CD8-positive, alpha-beta T cell (primary cell): ENCODE measurements at regions of chr22 and their contacts with region 1.

Region 1: GRCh38 chr22:41381329-41382097 is at the start of gene TEF:
- DNase-seq: peak; percentile 97 to 100 (median 98)
- ATAC-seq: peak; percentile 80
- H3K4me3 ChIP-seq: peak within 1 kb of the TSS; percentile 71 to 88
- H3K4me3 Mint-ChIP-seq: peak within 1 kb of the TSS; percentile 93
- H3K27ac ChIP-seq: peak within 1 kb of the TSS; percentile 87 to 95
- H3K27ac Mint-ChIP-seq: peak within 1 kb of the TSS; percentile 93
- H3K4me1 ChIP-seq: peaks cover 15% of the 10 kb centered on the region
- H3K4me1 Mint-ChIP-seq: peaks cover 21% of the 10 kb centered on the region
- H3K27me3 ChIP-seq: no peaks in the 10 kb centered on the region
- H3K27me3 Mint-ChIP-seq: no peaks in the 10 kb centered on the region
- CTCF ChIP-seq: no peak
- total RNA-seq, gene TEF: 2.8 to 3.8 TPM

Region 2: GRCh38 chr22:40808018-40808841 is 573.3 kb before region 1 on chr22:
- CTCF ChIA-PET with region 1: no interaction called
- POLR2A ChIA-PET with region 1: no interaction called
- intact Hi-C with region 1: no loop called
- DNase-seq: no peak
- ATAC-seq: no peak
- H3K4me3 ChIP-seq: no peak overlapping the region
- H3K4me3 Mint-ChIP-seq: no peak overlapping the region
- H3K27ac ChIP-seq: no peak overlapping the region
- H3K27ac Mint-ChIP-seq: no peak overlapping the region
- H3K4me1 ChIP-seq: no peaks in the 10 kb centered on the region
- H3K4me1 Mint-ChIP-seq: peaks cover 17% of the 10 kb centered on the region
- H3K27me3 ChIP-seq: no peaks in the 10 kb centered on the region
- H3K27me3 Mint-ChIP-seq: no peaks in the 10 kb centered on the region
- CTCF ChIP-seq: no peak

Region 3: GRCh38 chr22:41091132-41092022 is 290.1 kb before region 1 on chr22:
- CTCF ChIA-PET with region 1: no interaction called
- POLR2A ChIA-PET with region 1: interaction called, 5 read pairs
- intact Hi-C with region 1: loop called in 1 of 2 experiments (anchors 2 kb)
- DNase-seq: peak; percentile 99 to 100 (median 99)
- ATAC-seq: peak; percentile 88
- H3K4me3 ChIP-seq: peak overlapping the region; percentile 91 to 97
- H3K4me3 Mint-ChIP-seq: peak overlapping the region; percentile 99
- H3K27ac ChIP-seq: peak overlapping the region; percentile 93 to 96
- H3K27ac Mint-ChIP-seq: peak overlapping the region; percentile 100
- H3K4me1 ChIP-seq: peaks cover 16% of the 10 kb centered on the region
- H3K4me1 Mint-ChIP-seq: peaks cover 31% of the 10 kb centered on the region
- H3K27me3 ChIP-seq: no peaks in the 10 kb centered on the region
- H3K27me3 Mint-ChIP-seq: no peaks in the 10 kb centered on the region
- CTCF ChIP-seq: no peak

Region 4: GRCh38 chr22:41301105-41302020 is 80.2 kb before region 1 on chr22 and contains the start of gene ZC3H7B:
- CTCF ChIA-PET with region 1: no interaction called
- POLR2A ChIA-PET with region 1: interaction called, 19 read pairs
- intact Hi-C with region 1: loop called (anchors 1 kb)
- DNase-seq: peak; percentile 64 to 94 (median 81)
- ATAC-seq: peak; percentile 93
- H3K4me3 ChIP-seq: peak within 1 kb of the TSS; percentile 81 to 96
- H3K4me3 Mint-ChIP-seq: peak within 1 kb of the TSS; percentile 83
- H3K27ac ChIP-seq: peak within 1 kb of the TSS; percentile 72 to 80
- H3K27ac Mint-ChIP-seq: peak within 1 kb of the TSS; percentile 95
- H3K4me1 ChIP-seq: peaks cover 16% of the 10 kb centered on the region
- H3K4me1 Mint-ChIP-seq: peaks cover 29% of the 10 kb centered on the region
- H3K27me3 ChIP-seq: no peaks in the 10 kb centered on the region
- H3K27me3 Mint-ChIP-seq: no peaks in the 10 kb centered on the region
- CTCF ChIP-seq: peak; percentile 43
- total RNA-seq, gene ZC3H7B: 30.7 to 30.8 TPM

Region 5: GRCh38 chr22:41397143-41397811 is 15.8 kb after region 1 on chr22:
- CTCF ChIA-PET with region 1: no interaction called
- POLR2A ChIA-PET with region 1: no interaction called
- intact Hi-C with region 1: no loop called
- DNase-seq: no peak
- ATAC-seq: no peak
- H3K4me3 ChIP-seq: no peak overlapping the region
- H3K4me3 Mint-ChIP-seq: no peak overlapping the region
- H3K27ac ChIP-seq: no peak overlapping the region
- H3K27ac Mint-ChIP-seq: no peak overlapping the region
- H3K4me1 ChIP-seq: no peaks in the 10 kb centered on the region
- H3K4me1 Mint-ChIP-seq: no peaks in the 10 kb centered on the region
- H3K27me3 ChIP-seq: no peaks in the 10 kb centered on the region
- H3K27me3 Mint-ChIP-seq: no peaks in the 10 kb centered on the region
- CTCF ChIP-seq: no peak

Region 6: GRCh38 chr22:41468381-41469217 is 87.1 kb after region 1 on chr22 and contains the starts of genes ACO2 and PHF5A:
- CTCF ChIA-PET with region 1: interaction called, 3 read pairs
- POLR2A ChIA-PET with region 1: interaction called, 16 read pairs
- intact Hi-C with region 1: loop called (anchors 1 kb)
- DNase-seq: peak; percentile 97 to 99 (median 98)
- ATAC-seq: peak; percentile 90
- H3K4me3 ChIP-seq: peak within 1 kb of the TSS; percentile 92 to 94
- H3K4me3 Mint-ChIP-seq: peak within 1 kb of the TSS; percentile 91
- H3K27ac ChIP-seq: peak within 1 kb of the TSS; percentile 97 to 99
- H3K27ac Mint-ChIP-seq: peak within 1 kb of the TSS; percentile 99
- H3K4me1 ChIP-seq: peaks cover 23% of the 10 kb centered on the region
- H3K4me1 Mint-ChIP-seq: peaks cover 56% of the 10 kb centered on the region
- H3K27me3 ChIP-seq: no peaks in the 10 kb centered on the region
- H3K27me3 Mint-ChIP-seq: no peaks in the 10 kb centered on the region
- CTCF ChIP-seq: no peak
- total RNA-seq, gene ACO2: 83.7 to 95.2 TPM
- total RNA-seq, gene PHF5A: 52.9 to 57.4 TPM

Region 7: GRCh38 chr22:41621099-41621910 is 239.8 kb after region 1 on chr22 and contains the start of gene XRCC6:
- CTCF ChIA-PET with region 1: no interaction called
- POLR2A ChIA-PET with region 1: interaction called, 5 read pairs
- intact Hi-C with region 1: loop called (anchors 1 kb)
- DNase-seq: peak; percentile 99 to 100 (median 100)
- ATAC-seq: peak; percentile 93
- H3K4me3 ChIP-seq: peak within 1 kb of the TSS; percentile 84 to 100
- H3K4me3 Mint-ChIP-seq: peak within 1 kb of the TSS; percentile 100
- H3K27ac ChIP-seq: peak within 1 kb of the TSS; percentile 95 to 100
- H3K27ac Mint-ChIP-seq: peak within 1 kb of the TSS; percentile 100
- H3K4me1 ChIP-seq: peaks cover 25% of the 10 kb centered on the region
- H3K4me1 Mint-ChIP-seq: peaks cover 52% of the 10 kb centered on the region
- H3K27me3 ChIP-seq: no peaks in the 10 kb centered on the region
- H3K27me3 Mint-ChIP-seq: no peaks in the 10 kb centered on the region
- CTCF ChIP-seq: no peak
- total RNA-seq, gene XRCC6: 202 to 205 TPM

Region 8: DNA sequence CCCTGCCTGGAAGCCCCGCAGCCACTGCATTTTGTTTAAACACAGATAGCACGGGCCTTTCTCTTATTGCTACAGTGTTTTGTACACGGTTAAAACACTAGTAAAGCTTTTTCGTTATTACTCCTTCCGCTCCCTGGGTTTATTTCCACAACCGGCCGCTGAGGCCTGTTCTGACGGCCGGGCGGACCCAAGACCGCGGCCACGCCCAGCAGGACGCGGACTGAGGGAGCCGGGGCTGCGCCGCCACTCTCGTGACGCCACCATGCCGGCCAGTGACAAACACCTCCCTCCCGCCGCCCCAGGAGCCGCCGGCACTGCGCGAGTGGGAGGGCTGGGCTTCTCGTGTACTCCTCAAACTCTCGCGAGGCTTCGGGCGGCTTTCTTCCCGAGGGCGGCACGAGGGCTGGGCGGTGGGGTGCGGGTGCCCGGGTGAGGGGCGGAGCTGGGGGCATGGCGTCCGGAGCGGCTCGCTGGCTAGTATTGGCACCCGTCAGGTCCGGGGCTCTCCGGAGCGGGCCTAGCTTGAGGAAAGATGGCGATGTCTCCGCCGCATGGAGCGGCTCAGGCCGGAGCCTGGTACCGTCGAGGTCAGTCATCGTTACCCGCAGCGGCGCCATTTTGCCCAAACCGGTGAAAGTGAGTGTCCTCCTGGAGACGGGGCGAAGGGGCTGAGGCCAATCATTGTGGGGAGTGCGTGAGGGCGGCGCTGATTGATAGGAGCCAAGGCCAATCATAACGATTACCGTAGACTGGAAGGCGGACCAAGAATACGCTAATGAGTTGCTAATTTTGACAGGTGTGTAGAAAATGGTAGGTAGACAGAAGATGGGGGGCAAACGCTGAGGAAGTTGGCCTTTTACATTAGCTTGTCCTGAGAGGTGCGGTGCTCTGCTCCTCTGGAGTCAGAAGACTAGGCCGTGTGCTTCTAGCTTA is 698.1 kb after region 1 on chr22 and contains the start of gene SMDT1:
- CTCF ChIA-PET with region 1: no interaction called
- POLR2A ChIA-PET with region 1: no interaction called
- intact Hi-C with region 1: loop called in 1 of 2 experiments (anchors 5 kb)
- DNase-seq: peak; percentile 95 to 99 (median 98)
- ATAC-seq: peak; percentile 92
- H3K4me3 ChIP-seq: peak within 1 kb of the TSS; percentile 79 to 80
- H3K4me3 Mint-ChIP-seq: peak within 1 kb of the TSS; percentile 93
- H3K27ac ChIP-seq: peak within 1 kb of the TSS; percentile 89 to 97
- H3K27ac Mint-ChIP-seq: peak within 1 kb of the TSS; percentile 98
- H3K4me1 ChIP-seq: peaks cover 21% of the 10 kb centered on the region
- H3K4me1 Mint-ChIP-seq: peaks cover 36% of the 10 kb centered on the region
- H3K27me3 ChIP-seq: no peaks in the 10 kb centered on the region
- H3K27me3 Mint-ChIP-seq: no peaks in the 10 kb centered on the region
- CTCF ChIP-seq: no peak
- total RNA-seq, gene SMDT1: 30.4 to 34.5 TPM